Naive thymus-derived CD4-positive, alpha-beta T cell (primary cell): ENCODE measurements at regions of chr7 and their contacts with region 1.

Region 1: DNA sequence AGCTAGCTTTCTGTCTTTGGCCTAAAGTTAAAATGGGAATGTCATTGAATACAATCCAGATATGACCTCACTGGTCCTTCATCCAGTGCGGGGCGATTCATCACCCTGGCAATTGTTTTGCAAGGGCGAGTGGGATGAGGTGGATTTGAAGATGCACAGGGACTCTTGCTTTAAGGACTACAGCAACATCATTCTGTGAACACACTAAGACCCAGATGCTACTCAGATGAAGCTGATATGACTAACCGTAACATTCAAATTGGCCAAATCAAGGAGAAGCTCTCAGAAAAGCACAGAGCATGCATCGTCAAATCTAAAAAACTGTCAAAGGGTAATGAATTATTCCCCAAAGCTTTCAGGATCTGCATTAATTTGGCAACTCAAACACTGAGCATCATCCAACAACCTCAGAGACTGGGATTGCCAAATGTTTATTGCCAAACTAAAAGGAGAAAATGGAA is 12.8 kb downstream of the CPA1 start:
- DNase-seq: no peak
- ATAC-seq: no peak
- H3K4me3 ChIP-seq: no peak overlapping the region
- H3K4me3 Mint-ChIP-seq: peak overlapping the region in 5 of 10 donors; percentile 13 to 84 (median 76)
- H3K27ac ChIP-seq: no peak overlapping the region
- H3K27ac Mint-ChIP-seq: peak overlapping the region in 7 of 9 donors; percentile 14 to 93 (median 88)
- H3K4me1 ChIP-seq: peaks cover 0 to 14% of the 10 kb centered on the region in 2 donors
- H3K4me1 Mint-ChIP-seq: peaks cover 19 to 40% (median 34%) of the 10 kb centered on the region in 7 donors
- H3K27me3 ChIP-seq: no peaks in the 10 kb centered on the region
- H3K27me3 Mint-ChIP-seq: no peaks in the 10 kb centered on the region

Region 2: GRCh38 chr7:130205084-130205947 is 187.8 kb before region 1 on chr7 and contains the start of gene TMEM209:
- CTCF ChIA-PET with region 1: no interaction called
- POLR2A ChIA-PET with region 1: interaction called, 4 read pairs
- intact Hi-C with region 1: loop called in 1 of 2 experiments (anchors 5 kb)
- DNase-seq: peak; percentile 80 to 96 (median 93)
- ATAC-seq: peak; percentile 98
- H3K4me3 ChIP-seq: peak within 1 kb of the TSS; percentile 89
- H3K4me3 Mint-ChIP-seq: peak within 1 kb of the TSS; percentile 98 to 100 (median 100)
- H3K27ac ChIP-seq: peak within 1 kb of the TSS; percentile 83
- H3K27ac Mint-ChIP-seq: peak within 1 kb of the TSS; percentile 97 to 100 (median 99)
- H3K4me1 ChIP-seq: peaks cover 11 to 14% of the 10 kb centered on the region in 2 donors
- H3K4me1 Mint-ChIP-seq: peaks cover 13 to 43% (median 37%) of the 10 kb centered on the region in 7 donors
- H3K27me3 ChIP-seq: no peaks in the 10 kb centered on the region
- H3K27me3 Mint-ChIP-seq: peaks cover 0 to 9% (median 0%) of the 10 kb centered on the region in 5 donors
- total RNA-seq, gene TMEM209: 18.8 to 37.3 (median 35.1) TPM

Region 3: DNA sequence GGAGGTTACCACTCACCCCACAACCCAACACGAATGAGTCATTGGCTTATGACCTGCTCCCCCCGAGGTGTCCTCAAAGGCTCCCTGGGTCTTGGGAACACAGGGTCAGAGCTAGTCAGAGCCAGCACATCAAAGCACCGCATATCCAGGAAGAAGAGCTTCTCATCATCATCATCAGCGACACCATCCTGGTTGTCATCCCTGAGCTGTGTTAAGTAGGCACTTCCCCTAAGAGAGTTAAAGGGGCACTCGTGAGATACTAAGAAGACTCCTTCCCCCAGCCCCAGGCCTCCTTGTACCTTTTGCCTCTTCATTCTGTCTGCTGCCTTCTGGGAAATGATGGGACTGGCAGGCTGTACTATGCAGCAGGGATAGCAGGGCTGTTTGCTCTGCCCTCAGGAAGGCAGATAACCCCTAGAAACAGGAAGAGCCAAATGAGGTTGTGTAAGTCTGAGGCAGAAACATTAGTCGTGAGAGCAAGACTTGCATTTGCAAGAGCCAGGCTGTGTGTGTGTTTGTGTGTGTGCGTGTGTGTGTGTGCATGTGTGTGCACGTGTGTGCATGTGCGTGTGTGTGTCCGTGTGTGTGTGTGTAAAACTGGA is 23.9 kb before region 1 on chr7:
- CTCF ChIA-PET with region 1: interaction called, 3 read pairs
- POLR2A ChIA-PET with region 1: no interaction called
- intact Hi-C with region 1: loop called in 1 of 2 experiments (anchors 2 kb)
- DNase-seq: peak in 2 of 9 donors; percentile 8 to 20
- ATAC-seq: peak; percentile 55
- H3K4me3 ChIP-seq: no peak overlapping the region
- H3K4me3 Mint-ChIP-seq: peak overlapping the region; percentile 2 to 76 (median 52)
- H3K27ac ChIP-seq: no peak overlapping the region
- H3K27ac Mint-ChIP-seq: peak overlapping the region in 8 of 9 donors; percentile 32 to 93 (median 72)
- H3K4me1 ChIP-seq: peaks cover 0 to 12% of the 10 kb centered on the region in 2 donors
- H3K4me1 Mint-ChIP-seq: peaks cover 15 to 51% (median 38%) of the 10 kb centered on the region in 7 donors
- H3K27me3 ChIP-seq: no peaks in the 10 kb centered on the region
- H3K27me3 Mint-ChIP-seq: no peaks in the 10 kb centered on the region

Region 4: DNA sequence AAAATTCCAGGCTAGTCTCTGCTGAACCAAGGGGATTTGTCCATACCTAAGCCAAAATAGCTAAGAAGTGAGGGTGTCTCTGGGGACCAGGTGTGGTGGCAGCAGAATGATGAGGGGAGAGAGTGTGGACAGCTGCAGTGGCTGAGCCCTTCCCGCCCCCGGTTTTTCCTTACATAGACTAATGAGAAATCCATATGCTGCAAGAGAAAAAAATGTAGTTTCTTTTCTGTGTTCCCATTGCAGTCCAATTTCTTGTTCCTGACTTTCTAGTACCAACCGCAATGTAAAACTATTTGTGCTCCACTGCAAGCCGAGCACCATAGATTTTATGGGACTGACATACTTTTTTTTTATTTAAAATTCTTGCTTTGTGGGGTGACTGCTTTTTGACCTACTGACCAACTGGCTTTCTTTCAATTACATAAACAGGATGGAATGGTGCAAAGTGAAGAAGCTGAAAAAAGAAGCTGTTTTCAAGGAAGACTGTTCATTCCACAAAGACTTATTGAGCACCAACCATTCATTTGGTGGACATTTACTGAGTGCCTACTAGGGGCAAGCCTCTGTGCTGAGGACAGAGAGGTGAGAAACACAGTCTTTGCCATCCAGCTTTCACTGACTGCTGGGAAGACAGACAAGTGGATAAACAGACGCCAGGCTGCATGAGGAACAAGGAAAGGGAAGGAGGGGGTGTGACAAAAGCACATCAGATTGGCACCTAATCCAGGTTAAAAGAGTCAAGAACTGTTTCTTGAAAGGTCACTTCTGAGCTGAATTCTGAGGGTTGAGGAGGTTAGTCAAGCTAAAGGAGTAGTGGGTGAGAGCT is 37.9 kb after region 1 on chr7:
- CTCF ChIA-PET with region 1: no interaction called
- POLR2A ChIA-PET with region 1: interaction called, 5 read pairs
- intact Hi-C with region 1: loop called in 1 of 2 experiments (anchors 2 kb)
- DNase-seq: no peak
- ATAC-seq: no peak
- H3K4me3 ChIP-seq: no peak overlapping the region
- H3K4me3 Mint-ChIP-seq: no peak overlapping the region
- H3K27ac ChIP-seq: no peak overlapping the region
- H3K27ac Mint-ChIP-seq: no peak overlapping the region
- H3K4me1 ChIP-seq: peaks cover 6 to 52% of the 10 kb centered on the region in 2 donors
- H3K4me1 Mint-ChIP-seq: peaks cover 13 to 22% (median 16%) of the 10 kb centered on the region in 7 donors
- H3K27me3 ChIP-seq: no peaks in the 10 kb centered on the region
- H3K27me3 Mint-ChIP-seq: no peaks in the 10 kb centered on the region

Region 5: DNA sequence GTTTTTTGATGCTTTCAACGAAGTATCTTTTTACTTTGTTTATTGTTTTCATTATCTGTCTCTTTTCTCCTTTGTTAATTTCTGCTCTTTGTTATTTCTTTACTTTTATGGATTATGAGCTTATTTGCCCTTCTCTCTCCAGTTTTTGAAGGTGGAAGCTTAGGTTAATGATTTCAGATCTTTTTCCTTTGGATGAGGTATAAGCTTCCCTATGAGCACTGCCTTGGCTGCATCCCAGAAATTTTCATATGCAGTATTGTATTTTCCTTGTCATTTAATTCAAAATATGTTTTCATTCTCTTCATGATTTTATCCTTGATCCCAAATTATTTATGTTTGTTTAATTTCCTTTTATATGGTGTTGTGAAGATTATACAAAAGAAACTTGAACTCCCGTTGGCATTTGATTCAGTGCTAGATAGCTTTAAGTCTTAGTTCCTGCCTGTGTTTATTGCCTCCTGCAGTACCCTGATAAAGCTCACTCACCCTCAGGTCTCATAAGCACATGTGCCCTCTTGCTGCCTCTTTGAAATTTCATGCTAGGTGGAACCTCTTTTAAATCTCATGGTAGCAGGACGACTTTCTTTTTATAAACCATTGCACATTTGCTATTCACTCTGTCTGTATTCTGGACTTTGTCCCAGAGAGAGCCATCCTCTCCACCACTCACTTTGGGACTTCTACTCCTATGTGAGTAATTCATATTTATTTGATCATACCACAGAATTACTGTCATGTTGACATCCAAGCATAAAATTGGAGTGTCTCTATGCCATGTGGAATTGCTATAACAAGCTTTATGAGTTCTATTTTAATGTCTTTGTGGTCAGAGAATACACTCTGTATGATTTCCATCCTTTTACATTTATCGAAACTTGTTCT is 70.7 kb after region 1 on chr7:
- CTCF ChIA-PET with region 1: interaction called, 5 read pairs
- POLR2A ChIA-PET with region 1: no interaction called
- intact Hi-C with region 1: loop called in 1 of 2 experiments (anchors 2 kb)
- DNase-seq: peak in 4 of 9 donors; percentile 9 to 38 (median 22)
- ATAC-seq: no peak
- H3K4me3 ChIP-seq: no peak overlapping the region
- H3K4me3 Mint-ChIP-seq: no peak overlapping the region
- H3K27ac ChIP-seq: no peak overlapping the region
- H3K27ac Mint-ChIP-seq: no peak overlapping the region
- H3K4me1 ChIP-seq: no peaks in the 10 kb centered on the region
- H3K4me1 Mint-ChIP-seq: peaks cover 0 to 13% (median 11%) of the 10 kb centered on the region in 7 donors
- H3K27me3 ChIP-seq: no peaks in the 10 kb centered on the region
- H3K27me3 Mint-ChIP-seq: peaks cover 0 to 4% (median 0%) of the 10 kb centered on the region in 5 donors

Region 6: GRCh38 chr7:130649004-130649790 is 256.1 kb after region 1 on chr7:
- CTCF ChIA-PET with region 1: no interaction called
- POLR2A ChIA-PET with region 1: no interaction called
- intact Hi-C with region 1: no loop called
- DNase-seq: peak in 1 of 9 donors; percentile 28
- ATAC-seq: no peak
- H3K4me3 ChIP-seq: no peak overlapping the region
- H3K4me3 Mint-ChIP-seq: peak overlapping the region in 1 of 10 donors; percentile 68
- H3K27ac ChIP-seq: no peak overlapping the region
- H3K27ac Mint-ChIP-seq: peak overlapping the region in 1 of 9 donors; percentile 50
- H3K4me1 ChIP-seq: no peaks in the 10 kb centered on the region
- H3K4me1 Mint-ChIP-seq: peaks cover 0 to 21% (median 0%) of the 10 kb centered on the region in 7 donors
- H3K27me3 ChIP-seq: no peaks in the 10 kb centered on the region
- H3K27me3 Mint-ChIP-seq: no peaks in the 10 kb centered on the region

Region 7: DNA sequence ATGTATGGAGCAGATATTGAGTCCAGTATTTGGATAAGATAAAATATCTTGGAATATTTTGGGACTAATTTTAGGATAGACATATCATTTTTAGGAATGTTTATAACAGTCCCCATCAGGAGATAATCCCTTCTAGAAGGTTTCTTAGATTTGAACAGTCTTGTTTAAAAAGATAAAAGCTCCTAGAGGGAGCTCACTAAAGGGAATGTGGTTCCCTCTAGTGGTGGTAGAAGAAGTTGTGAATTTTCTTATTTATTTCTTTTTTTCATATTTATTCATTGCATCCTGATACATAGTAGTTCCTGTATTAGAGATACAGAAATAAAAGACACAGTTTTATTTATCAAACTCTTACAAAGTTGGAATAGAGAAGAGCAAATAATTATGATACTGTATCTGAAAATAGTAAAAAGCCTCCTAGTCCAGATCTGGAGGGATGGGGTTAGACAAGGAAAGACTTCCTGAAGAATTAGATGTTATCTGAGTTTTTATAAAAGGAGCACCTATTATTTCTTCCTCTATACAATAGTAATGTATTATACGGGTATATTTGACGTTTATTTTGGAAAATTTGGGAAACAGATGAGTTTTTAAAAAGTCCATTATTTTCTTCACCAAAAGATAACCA is 365.4 kb after region 1 on chr7:
- CTCF ChIA-PET with region 1: no interaction called
- POLR2A ChIA-PET with region 1: no interaction called
- intact Hi-C with region 1: no loop called
- DNase-seq: peak in 6 of 9 donors; percentile 27 to 53 (median 43)
- ATAC-seq: peak; percentile 66
- H3K4me3 ChIP-seq: no peak overlapping the region
- H3K4me3 Mint-ChIP-seq: no peak overlapping the region
- H3K27ac ChIP-seq: no peak overlapping the region
- H3K27ac Mint-ChIP-seq: no peak overlapping the region
- H3K4me1 ChIP-seq: no peaks in the 10 kb centered on the region
- H3K4me1 Mint-ChIP-seq: peaks cover 0 to 2% (median 0%) of the 10 kb centered on the region in 7 donors
- H3K27me3 ChIP-seq: no peaks in the 10 kb centered on the region
- H3K27me3 Mint-ChIP-seq: peaks cover 0 to 13% (median 4%) of the 10 kb centered on the region in 5 donors

Region 8: GRCh38 chr7:130853503-130854279 is 460.6 kb after region 1 on chr7:
- CTCF ChIA-PET with region 1: no interaction called
- POLR2A ChIA-PET with region 1: no interaction called
- intact Hi-C with region 1: no loop called
- DNase-seq: no peak
- ATAC-seq: no peak
- H3K4me3 ChIP-seq: no peak overlapping the region
- H3K4me3 Mint-ChIP-seq: no peak overlapping the region
- H3K27ac ChIP-seq: no peak overlapping the region
- H3K27ac Mint-ChIP-seq: no peak overlapping the region
- H3K4me1 ChIP-seq: no peaks in the 10 kb centered on the region
- H3K4me1 Mint-ChIP-seq: no peaks in the 10 kb centered on the region
- H3K27me3 ChIP-seq: no peaks in the 10 kb centered on the region
- H3K27me3 Mint-ChIP-seq: no peaks in the 10 kb centered on the region

Region 9: GRCh38 chr7:131488361-131488760 is 1095.2 kb after region 1 on chr7:
- CTCF ChIA-PET with region 1: no interaction called
- POLR2A ChIA-PET with region 1: no interaction called
- intact Hi-C with region 1: no loop called
- DNase-seq: no peak
- ATAC-seq: no peak
- H3K4me3 ChIP-seq: no peak overlapping the region
- H3K4me3 Mint-ChIP-seq: no peak overlapping the region
- H3K27ac ChIP-seq: no peak overlapping the region
- H3K27ac Mint-ChIP-seq: peak overlapping the region in 1 of 9 donors; percentile 18
- H3K4me1 ChIP-seq: no peaks in the 10 kb centered on the region
- H3K4me1 Mint-ChIP-seq: no peaks in the 10 kb centered on the region
- H3K27me3 ChIP-seq: no peaks in the 10 kb centered on the region
- H3K27me3 Mint-ChIP-seq: no peaks in the 10 kb centered on the region